ENCODE measurements at regions of chr15 and their contacts with region 1.

Region 1: GRCh38 chr15:90482124-90483011 is 47.4 kb upstream of the CRTC3 start:
- DNase-seq: peak; percentile 39
- CTCF ChIP-seq: peak; percentile 68

Region 2: GRCh38 chr15:90291679-90292356 is 190.6 kb before region 1 on chr15:
- CTCF ChIA-PET with region 1: interaction called, 30 read pairs
- POLR2A ChIA-PET with region 1: no interaction called
- DNase-seq: peak; percentile 32
- CTCF ChIP-seq: no peak

Region 3: DNA sequence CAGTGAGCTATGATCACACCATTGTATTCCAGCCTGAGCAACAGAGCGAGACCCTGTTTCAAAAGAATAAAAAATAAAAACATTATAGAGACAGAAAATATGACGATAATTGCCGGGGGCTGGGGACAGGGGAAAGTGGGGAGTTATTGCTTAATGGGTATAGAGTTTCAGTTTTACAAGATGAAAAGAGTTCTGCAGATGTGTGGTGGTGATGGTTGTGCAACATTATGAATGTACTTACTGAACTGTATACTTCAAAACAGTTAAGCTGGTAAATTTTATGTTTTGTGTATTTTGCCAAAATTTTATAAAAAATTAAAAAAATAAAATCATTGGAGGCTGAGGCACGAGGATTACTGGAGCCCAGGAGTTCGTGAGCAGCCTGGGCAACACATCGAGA is 155.1 kb before region 1 on chr15:
- CTCF ChIA-PET with region 1: interaction called, 112 read pairs
- POLR2A ChIA-PET with region 1: no interaction called
- DNase-seq: no peak
- CTCF ChIP-seq: no peak

Region 4: GRCh38 chr15:90449206-90449735 is 33.1 kb before region 1 on chr15:
- CTCF ChIA-PET with region 1: interaction called, 21 read pairs
- POLR2A ChIA-PET with region 1: no interaction called
- DNase-seq: no peak
- CTCF ChIP-seq: no peak

Region 5: DNA sequence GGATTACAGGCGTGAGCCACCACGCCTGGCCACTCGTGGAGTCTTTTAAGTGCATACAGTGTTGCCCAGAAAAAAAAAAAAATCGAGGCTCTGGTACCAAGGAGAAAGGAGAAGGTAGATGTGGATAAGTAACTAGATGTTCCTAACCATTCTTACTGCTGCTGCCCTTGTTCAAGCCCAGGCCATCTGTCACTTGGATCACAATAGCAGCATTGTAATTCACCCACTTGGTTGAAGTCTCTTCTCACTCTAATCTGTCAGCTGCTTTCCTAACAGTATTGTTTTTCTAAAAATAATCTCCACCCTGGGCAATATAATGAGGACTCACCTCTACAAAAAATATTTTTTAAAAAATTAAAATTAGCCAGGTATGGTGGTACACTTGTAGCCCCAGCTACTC is 10.6 kb before region 1 on chr15:
- CTCF ChIA-PET with region 1: interaction called, 43 read pairs
- POLR2A ChIA-PET with region 1: interaction called, 3 read pairs
- DNase-seq: no peak
- CTCF ChIP-seq: no peak

Region 6: GRCh38 chr15:90801803-90802202 is 319.4 kb after region 1 on chr15:
- CTCF ChIA-PET with region 1: no interaction called
- POLR2A ChIA-PET with region 1: no interaction called
- DNase-seq: no peak
- CTCF ChIP-seq: no peak

Measured in GM10248 (cell line).